GM12878 (cell line): ENCODE measurements at regions of chr22 and their contacts with region 1.

Region 1: GRCh38 chr22:31241936-31242335 is 29.8 kb downstream of the LIMK2 start:
- DNase-seq: no peak
- ATAC-seq: no peak
- H3K4me3 ChIP-seq: no peak overlapping the region
- H3K27ac ChIP-seq: no peak overlapping the region
- H3K4me1 ChIP-seq: peaks cover 6% of the 10 kb centered on the region
- H3K27me3 ChIP-seq: no peaks in the 10 kb centered on the region
- CTCF ChIP-seq: no peak
- EP300 ChIP-seq: no peak
- POLR2A ChIP-seq: no peak
- RAD21 ChIP-seq: no peak

Region 2: DNA sequence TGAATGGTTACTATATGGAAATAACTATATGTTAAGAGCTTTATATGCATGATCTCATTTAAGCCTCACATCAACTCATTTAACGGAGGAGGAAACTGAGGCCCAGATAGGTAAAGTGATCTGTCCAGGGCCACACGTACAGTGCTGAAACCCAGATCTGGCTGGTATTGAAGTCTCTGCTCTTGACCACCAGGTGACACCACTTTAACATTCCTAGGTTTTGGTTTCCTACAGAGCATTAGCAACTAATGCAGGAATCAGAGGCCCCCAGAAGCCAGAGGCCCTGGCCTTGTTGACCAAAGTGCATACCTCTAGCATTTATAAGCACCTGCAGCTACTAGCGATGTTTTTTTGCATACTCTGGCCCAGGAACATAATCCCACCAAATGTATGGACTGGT is 42.8 kb before region 1 on chr22:
- CTCF ChIA-PET with region 1: no interaction called
- POLR2A ChIA-PET with region 1: no interaction called
- RAD21 ChIA-PET with region 1: no interaction called
- SMC1A ChIA-PET with region 1: no interaction called
- in situ Hi-C with region 1: no loop called
- intact Hi-C with region 1: no loop called
- DNase-seq: no peak
- ATAC-seq: no peak
- H3K4me3 ChIP-seq: no peak overlapping the region
- H3K27ac ChIP-seq: no peak overlapping the region
- H3K4me1 ChIP-seq: no peaks in the 10 kb centered on the region
- H3K27me3 ChIP-seq: no peaks in the 10 kb centered on the region
- CTCF ChIP-seq: 0 out of 6 replicates have a peak, but pooled peaks of 1 of the 3 experiments have one; percentile 10
- EP300 ChIP-seq: no peak
- POLR2A ChIP-seq: no peak
- RAD21 ChIP-seq: 0 out of 2 replicates have a peak, but pooled peaks have one; percentile 4

Region 3: GRCh38 chr22:31218565-31219262 is 23.2 kb before region 1 on chr22:
- CTCF ChIA-PET with region 1: no interaction called
- POLR2A ChIA-PET with region 1: no interaction called
- RAD21 ChIA-PET with region 1: no interaction called
- SMC1A ChIA-PET with region 1: interaction called, 10 read pairs
- in situ Hi-C with region 1: no loop called
- intact Hi-C with region 1: no loop called
- DNase-seq: no peak
- ATAC-seq: peak; percentile 22; the same call in 1 of the 3 replicates
- H3K4me3 ChIP-seq: peak overlapping the region; percentile 23; the same call in 1 of the 2 replicates
- H3K27ac ChIP-seq: peak overlapping the region; percentile 75
- H3K4me1 ChIP-seq: peaks cover 44% of the 10 kb centered on the region
- H3K27me3 ChIP-seq: no peaks in the 10 kb centered on the region
- CTCF ChIP-seq: no peak
- EP300 ChIP-seq: no peak
- POLR2A ChIP-seq: no peak
- RAD21 ChIP-seq: no peak